Activated naive CD4-positive, alpha-beta T cell treated with anti-CD3 and anti-CD28 coated beads for 36 hours (primary cell): ENCODE measurements at regions of chr3 and their contacts with region 1.

Region 1: DNA sequence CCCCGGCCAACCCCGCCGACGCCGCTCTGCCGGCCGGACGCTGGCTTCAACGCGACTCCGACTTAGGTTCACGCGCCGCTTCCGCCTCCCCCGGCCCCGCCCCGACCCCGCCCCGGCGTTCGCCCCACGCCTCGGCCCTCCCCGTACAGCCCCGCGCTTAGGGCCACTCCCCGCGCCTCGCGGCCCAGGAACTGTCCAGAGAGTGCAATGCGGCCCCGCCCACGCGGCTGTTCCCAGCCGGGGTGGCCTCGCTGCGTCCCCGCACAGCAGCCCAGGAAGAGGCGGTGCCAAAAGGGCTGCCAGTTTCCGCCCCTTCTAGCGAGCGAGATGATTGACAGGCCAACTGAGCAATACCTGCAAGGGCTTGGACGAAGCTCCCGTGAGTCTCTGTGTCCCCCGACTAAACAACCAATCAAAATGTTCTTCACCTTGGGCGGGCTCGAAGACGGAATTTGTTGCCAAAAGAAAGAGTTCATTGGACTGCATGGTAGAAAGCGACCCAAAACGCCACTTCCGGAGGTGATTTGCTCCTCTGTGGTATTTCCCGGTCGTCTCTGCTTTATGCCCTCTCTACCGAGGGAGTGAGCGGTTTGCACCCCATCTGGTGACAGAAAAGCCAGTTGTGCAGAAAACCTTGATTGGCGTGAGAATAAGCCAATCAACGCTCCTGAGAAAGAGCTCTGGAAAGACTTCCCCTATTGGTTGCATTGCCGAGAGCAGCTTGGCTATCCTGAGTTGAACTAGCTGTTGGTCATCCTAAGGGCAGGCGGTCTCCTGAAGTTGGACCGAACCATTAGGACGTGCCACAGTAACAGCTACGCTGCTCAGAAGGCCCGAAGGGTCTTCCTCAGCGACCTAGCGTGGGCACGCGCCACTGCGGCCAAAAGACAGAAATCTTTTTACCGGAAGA is at the start of gene UBP1:
- DNase-seq: peak; percentile 99
- H3K4me3 Mint-ChIP-seq: peak within 1 kb of the TSS; percentile 99
- H3K27ac Mint-ChIP-seq: peak within 1 kb of the TSS; percentile 100
- H3K4me1 Mint-ChIP-seq: peaks cover 34% of the 10 kb centered on the region
- H3K27me3 Mint-ChIP-seq: no peaks in the 10 kb centered on the region
- total RNA-seq, gene UBP1: 42.8 to 44.0 TPM

Region 2: DNA sequence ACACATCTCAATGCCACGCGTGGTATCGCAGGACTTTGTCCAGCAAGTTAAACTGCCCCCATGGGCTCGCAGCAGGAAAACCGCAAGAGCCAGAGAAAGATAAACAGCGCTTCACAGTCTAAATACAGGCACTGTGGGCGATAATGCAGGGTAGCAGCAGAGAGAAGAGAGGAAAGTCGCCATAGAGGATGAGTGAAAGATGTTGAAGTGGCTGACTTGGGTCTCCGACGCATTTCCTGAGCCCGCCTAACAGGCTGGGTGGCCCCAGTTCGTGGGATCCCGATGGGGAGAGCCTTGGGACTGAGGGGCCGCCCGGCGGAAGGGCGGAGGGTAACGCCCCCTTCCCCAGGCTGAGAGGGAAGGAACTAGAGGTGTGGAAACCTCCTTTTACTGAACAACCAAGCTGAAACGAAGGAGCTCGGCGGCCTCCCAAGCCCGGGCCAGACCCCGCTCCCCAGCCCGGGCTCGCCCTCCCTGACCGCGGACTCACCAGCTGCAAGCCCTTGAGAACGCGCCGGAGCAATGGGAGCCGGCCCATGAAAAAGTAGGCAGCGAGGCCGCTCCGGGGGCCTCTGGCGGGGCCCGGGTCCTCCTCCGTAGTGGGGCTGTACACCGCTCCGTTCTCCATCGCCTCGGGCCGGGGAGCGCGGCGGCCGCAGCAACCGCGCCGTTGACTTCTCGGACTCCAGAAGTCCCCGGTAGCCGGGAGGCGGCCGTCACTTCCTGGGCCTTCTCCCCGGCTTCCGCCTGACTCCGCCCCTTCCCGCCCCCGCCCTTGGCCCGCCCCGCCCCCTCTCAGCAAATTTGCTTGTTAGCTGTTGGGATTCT is 938.2 kb before region 1 on chr3 and contains the start of gene CMTM6:
- CTCF ChIA-PET with region 1: no interaction called
- intact Hi-C with region 1: loop called (anchors 1 kb)
- DNase-seq: peak; percentile 81
- H3K4me3 Mint-ChIP-seq: peak within 1 kb of the TSS; percentile 97
- H3K27ac Mint-ChIP-seq: peak within 1 kb of the TSS; percentile 89
- H3K4me1 Mint-ChIP-seq: peaks cover 27% of the 10 kb centered on the region
- H3K27me3 Mint-ChIP-seq: no peaks in the 10 kb centered on the region
- total RNA-seq, gene CMTM6: 43.7 to 44.3 TPM

Region 3: GRCh38 chr3:32947789-32948238 is 492.8 kb before region 1 on chr3:
- CTCF ChIA-PET with region 1: no interaction called
- intact Hi-C with region 1: loop called (anchors 2 kb)
- DNase-seq: peak; percentile 99
- H3K4me3 Mint-ChIP-seq: no peak overlapping the region
- H3K27ac Mint-ChIP-seq: no peak overlapping the region
- H3K4me1 Mint-ChIP-seq: peaks cover 38% of the 10 kb centered on the region
- H3K27me3 Mint-ChIP-seq: no peaks in the 10 kb centered on the region

Region 4: DNA sequence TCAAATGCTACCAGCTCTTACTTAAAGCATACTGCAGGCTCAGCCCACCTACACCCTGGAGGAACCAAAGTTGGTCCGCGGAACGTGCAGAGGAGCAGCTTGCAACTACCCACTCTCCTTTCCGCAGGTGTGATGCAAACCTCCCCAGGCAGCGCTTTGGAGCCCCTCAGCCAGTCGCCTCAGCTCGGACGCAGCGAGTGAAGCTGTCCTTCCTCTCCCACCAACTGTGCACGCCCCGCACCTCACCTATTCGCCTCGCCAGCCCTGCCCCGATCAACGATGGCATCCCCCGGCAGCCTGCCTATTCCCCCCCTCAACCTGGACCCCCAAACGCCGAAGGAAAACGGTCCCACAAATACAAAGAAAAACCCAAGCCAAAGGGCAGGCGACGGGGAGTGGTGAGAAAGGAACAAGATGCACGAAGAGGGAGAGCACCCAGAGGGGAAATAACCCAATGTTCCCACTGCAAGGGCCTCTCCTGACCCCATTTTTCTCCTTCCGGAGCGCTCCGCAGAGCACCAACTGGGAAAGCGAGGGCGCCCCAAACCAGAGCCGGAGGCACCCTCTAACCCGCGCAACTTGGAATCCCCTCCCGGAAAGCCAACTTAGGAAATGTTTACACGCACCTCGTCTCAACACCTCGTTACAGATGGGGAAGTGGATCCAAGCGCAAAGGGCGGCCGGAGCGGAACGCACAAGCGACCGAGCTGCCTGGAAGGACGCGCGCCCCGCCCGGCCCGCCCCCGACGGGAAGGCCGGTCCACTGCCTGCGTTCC is 344.3 kb before region 1 on chr3:
- CTCF ChIA-PET with region 1: interaction called, 4 read pairs
- intact Hi-C with region 1: loop called (anchors 1 kb)
- DNase-seq: peak; percentile 68
- H3K4me3 Mint-ChIP-seq: peak overlapping the region; percentile 98
- H3K27ac Mint-ChIP-seq: peak overlapping the region; percentile 88
- H3K4me1 Mint-ChIP-seq: peaks cover 41% of the 10 kb centered on the region
- H3K27me3 Mint-ChIP-seq: no peaks in the 10 kb centered on the region

Region 5: DNA sequence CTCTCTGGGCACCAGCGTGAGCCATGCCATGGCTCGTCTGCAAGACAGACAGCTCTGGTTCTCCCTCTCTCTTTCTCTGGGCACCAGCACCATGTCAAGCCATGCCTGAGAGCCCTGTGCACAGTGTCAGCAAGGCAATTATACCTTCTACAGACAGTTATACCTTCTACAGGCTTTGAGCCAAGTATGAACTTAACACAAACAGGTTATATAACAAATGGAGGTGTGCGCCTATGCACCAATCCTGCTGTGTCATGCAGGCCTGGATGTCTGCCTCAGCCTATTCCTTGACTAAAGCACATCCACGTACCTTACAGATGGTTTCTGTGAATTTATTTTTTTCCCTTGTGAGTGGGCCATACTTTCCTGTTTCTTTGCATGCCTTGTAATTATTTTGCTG is 169.3 kb before region 1 on chr3:
- CTCF ChIA-PET with region 1: no interaction called
- intact Hi-C with region 1: no loop called
- DNase-seq: no peak
- H3K4me3 Mint-ChIP-seq: no peak overlapping the region
- H3K27ac Mint-ChIP-seq: no peak overlapping the region
- H3K4me1 Mint-ChIP-seq: no peaks in the 10 kb centered on the region
- H3K27me3 Mint-ChIP-seq: peaks cover 14% of the 10 kb centered on the region

Region 6: DNA sequence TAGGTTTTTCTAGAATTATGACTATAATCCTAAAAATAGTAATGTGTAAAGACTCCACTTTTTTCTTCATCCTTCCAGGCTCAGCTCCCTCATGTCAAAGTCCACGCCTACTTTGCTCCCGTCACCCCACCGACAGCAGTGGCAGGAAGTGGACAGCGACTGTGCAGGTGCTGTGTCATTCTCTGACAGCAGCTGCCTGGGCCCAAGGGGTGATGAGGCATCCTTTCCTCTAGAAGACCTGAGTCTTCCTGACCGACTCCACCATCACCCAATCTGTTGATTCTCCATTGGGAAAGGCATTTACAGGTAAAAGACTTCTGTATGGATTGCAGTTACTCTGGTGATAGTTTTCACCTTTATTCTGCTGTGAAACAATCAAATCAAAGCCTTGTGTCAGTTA is 55.2 kb before region 1 on chr3:
- CTCF ChIA-PET with region 1: no interaction called
- intact Hi-C with region 1: loop called (anchors 2 kb)
- DNase-seq: peak; percentile 79
- H3K4me3 Mint-ChIP-seq: no peak overlapping the region
- H3K27ac Mint-ChIP-seq: peak overlapping the region; percentile 65
- H3K4me1 Mint-ChIP-seq: peaks cover 11% of the 10 kb centered on the region
- H3K27me3 Mint-ChIP-seq: no peaks in the 10 kb centered on the region

Region 7: DNA sequence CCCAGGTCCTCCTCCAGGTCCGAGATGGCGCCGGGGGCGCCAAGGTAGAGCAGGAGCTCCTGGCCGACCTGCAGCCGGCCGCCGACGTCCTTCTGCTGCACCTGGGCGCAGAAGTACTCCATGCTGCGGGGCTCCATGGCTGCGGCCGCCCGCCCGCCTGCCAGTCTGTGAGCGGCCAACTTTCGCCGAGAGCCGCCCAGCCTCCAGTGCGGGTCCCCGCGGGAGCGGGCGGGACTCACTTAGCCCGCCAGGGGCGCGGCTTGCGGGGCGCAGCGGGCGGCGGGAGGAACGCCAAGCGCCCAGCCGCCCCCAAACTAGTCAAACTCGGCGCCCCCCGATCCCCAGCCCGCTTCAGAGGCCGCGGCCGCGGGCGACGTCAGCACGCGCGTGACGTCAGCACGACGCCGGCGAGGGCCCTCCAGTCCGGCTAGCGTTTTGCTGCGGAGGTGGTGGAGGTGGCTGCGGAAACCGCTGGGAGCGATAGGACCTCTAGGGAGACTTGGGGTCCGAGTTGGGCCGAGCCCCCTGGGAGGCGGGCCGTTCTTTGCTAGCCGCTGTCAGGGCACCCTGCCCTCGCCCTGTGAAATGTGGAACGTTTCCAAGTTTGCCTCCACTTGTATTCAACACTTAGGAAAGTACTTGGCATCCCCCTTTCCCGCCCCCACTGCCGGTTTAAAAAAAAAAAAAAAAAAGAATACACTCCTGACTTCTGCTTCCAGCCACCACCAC is 277.5 kb after region 1 on chr3 and contains the start of gene CLASP2:
- CTCF ChIA-PET with region 1: interaction called, 3 read pairs
- intact Hi-C with region 1: loop called (anchors 1 kb)
- DNase-seq: peak; percentile 83
- H3K4me3 Mint-ChIP-seq: peak within 1 kb of the TSS; percentile 86
- H3K27ac Mint-ChIP-seq: peak within 1 kb of the TSS; percentile 91
- H3K4me1 Mint-ChIP-seq: peaks cover 10% of the 10 kb centered on the region
- H3K27me3 Mint-ChIP-seq: no peaks in the 10 kb centered on the region
- total RNA-seq, gene CLASP2: 40.4 to 41.4 TPM